GM12878 (cell line): ENCODE measurements at regions of chr4 and their contacts with region 1.

Region 1: GRCh38 chr4:83639849-83640493 is 104.1 kb downstream of the GPAT3 start:
- DNase-seq: peak; percentile 42
- ATAC-seq: peak; percentile 89
- H3K4me3 ChIP-seq: no peak overlapping the region
- H3K27ac ChIP-seq: no peak overlapping the region
- H3K4me1 ChIP-seq: no peaks in the 10 kb centered on the region
- H3K27me3 ChIP-seq: peaks cover 0 to 1% of the 10 kb centered on the region in 2 experiments; a peak in 1 of 4 replicates
- CTCF ChIP-seq: peak; percentile 67 to 90 (median 80)
- EP300 ChIP-seq: no peak
- POLR2A ChIP-seq: no peak
- RAD21 ChIP-seq: peak; percentile 89

Region 2: GRCh38 chr4:83362492-83363329 is 277.3 kb before region 1 on chr4:
- CTCF ChIA-PET with region 1: interaction called, 5 read pairs
- POLR2A ChIA-PET with region 1: no interaction called
- RAD21 ChIA-PET with region 1: interaction called, 3 read pairs
- SMC1A ChIA-PET with region 1: interaction called, 3 read pairs
- in situ Hi-C with region 1: no loop called
- intact Hi-C with region 1: loop called (anchors 5 kb)
- DNase-seq: no peak
- ATAC-seq: peak; percentile 88
- H3K4me3 ChIP-seq: no peak overlapping the region
- H3K27ac ChIP-seq: no peak overlapping the region
- H3K4me1 ChIP-seq: no peaks in the 10 kb centered on the region
- H3K27me3 ChIP-seq: no peaks in the 10 kb centered on the region
- CTCF ChIP-seq: peak; percentile 29 to 46 (median 39); a peak in 5 of 6 replicates
- EP300 ChIP-seq: no peak
- POLR2A ChIP-seq: no peak
- RAD21 ChIP-seq: peak; percentile 43; the same call in 1 of the 2 replicates

Region 3: GRCh38 chr4:83503974-83504373 is 136.0 kb before region 1 on chr4:
- CTCF ChIA-PET with region 1: interaction called, 85 read pairs
- POLR2A ChIA-PET with region 1: no interaction called
- RAD21 ChIA-PET with region 1: interaction called, 12 read pairs
- SMC1A ChIA-PET with region 1: interaction called, 14 read pairs
- in situ Hi-C with region 1: no loop called
- intact Hi-C with region 1: loop called (anchors 1 kb)
- DNase-seq: no peak
- ATAC-seq: no peak
- H3K4me3 ChIP-seq: no peak overlapping the region
- H3K27ac ChIP-seq: no peak overlapping the region
- H3K4me1 ChIP-seq: no peaks in the 10 kb centered on the region
- H3K27me3 ChIP-seq: no peaks in the 10 kb centered on the region
- CTCF ChIP-seq: no peak
- EP300 ChIP-seq: no peak
- POLR2A ChIP-seq: no peak
- RAD21 ChIP-seq: no peak

Region 4: GRCh38 chr4:83961575-83961974 is 321.6 kb after region 1 on chr4:
- CTCF ChIA-PET with region 1: interaction called, 13 read pairs
- POLR2A ChIA-PET with region 1: no interaction called
- RAD21 ChIA-PET with region 1: no interaction called
- SMC1A ChIA-PET with region 1: no interaction called
- in situ Hi-C with region 1: no loop called
- intact Hi-C with region 1: no loop called
- DNase-seq: no peak
- ATAC-seq: no peak
- H3K4me3 ChIP-seq: no peak overlapping the region
- H3K27ac ChIP-seq: no peak overlapping the region
- H3K4me1 ChIP-seq: no peaks in the 10 kb centered on the region
- H3K27me3 ChIP-seq: no peaks in the 10 kb centered on the region
- CTCF ChIP-seq: no peak
- EP300 ChIP-seq: no peak
- POLR2A ChIP-seq: no peak
- RAD21 ChIP-seq: 0 out of 2 replicates have a peak, but pooled peaks have one; percentile 1

Region 5: DNA sequence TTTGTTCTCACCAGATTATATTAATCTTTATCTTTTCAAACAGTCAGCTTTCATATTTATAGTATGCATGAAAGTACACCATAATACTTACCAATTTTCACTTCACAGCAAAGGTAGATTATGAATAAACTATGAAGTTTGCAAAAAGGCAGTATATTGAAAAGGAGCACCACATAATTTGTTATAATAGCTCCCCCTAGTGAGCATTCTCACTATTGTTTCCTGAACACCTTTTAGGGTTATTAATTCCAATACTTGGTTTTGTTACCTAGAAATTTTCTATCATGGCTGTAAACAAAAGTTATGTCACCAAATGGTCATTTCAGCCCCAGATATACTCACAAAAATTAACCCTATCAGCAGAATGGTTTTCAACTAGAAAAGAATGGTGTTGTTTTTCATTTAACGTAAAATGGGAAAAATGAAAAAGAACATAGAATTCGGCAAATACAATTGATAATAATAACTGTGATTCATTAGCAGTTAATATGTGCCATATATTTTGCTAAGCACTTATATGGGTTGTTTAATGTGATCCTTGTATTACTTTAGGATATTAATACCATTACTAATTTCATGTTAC is 889.3 kb after region 1 on chr4:
- CTCF ChIA-PET with region 1: interaction called, 9 read pairs
- POLR2A ChIA-PET with region 1: no interaction called
- RAD21 ChIA-PET with region 1: no interaction called
- SMC1A ChIA-PET with region 1: no interaction called
- in situ Hi-C with region 1: no loop called
- intact Hi-C with region 1: loop called (anchors 5 kb)
- DNase-seq: no peak
- ATAC-seq: peak; percentile 64
- H3K4me3 ChIP-seq: no peak overlapping the region
- H3K27ac ChIP-seq: no peak overlapping the region
- H3K4me1 ChIP-seq: no peaks in the 10 kb centered on the region
- H3K27me3 ChIP-seq: no peaks in the 10 kb centered on the region
- CTCF ChIP-seq: peak; percentile 38 to 53 (median 50); a peak in 4 of 6 replicates
- EP300 ChIP-seq: no peak
- POLR2A ChIP-seq: no peak
- RAD21 ChIP-seq: peak; percentile 48